Head of caudate nucleus (tissue), 42 donors: ENCODE measurements at regions of chr6 and their contacts with region 1.

Region 1: GRCh38 chr6:132830334-132830751 is 16.0 kb downstream of the RPS12 start:
- DNase-seq: peak in 17 of 42 donors; percentile 17 to 75 (median 48)

Region 2: DNA sequence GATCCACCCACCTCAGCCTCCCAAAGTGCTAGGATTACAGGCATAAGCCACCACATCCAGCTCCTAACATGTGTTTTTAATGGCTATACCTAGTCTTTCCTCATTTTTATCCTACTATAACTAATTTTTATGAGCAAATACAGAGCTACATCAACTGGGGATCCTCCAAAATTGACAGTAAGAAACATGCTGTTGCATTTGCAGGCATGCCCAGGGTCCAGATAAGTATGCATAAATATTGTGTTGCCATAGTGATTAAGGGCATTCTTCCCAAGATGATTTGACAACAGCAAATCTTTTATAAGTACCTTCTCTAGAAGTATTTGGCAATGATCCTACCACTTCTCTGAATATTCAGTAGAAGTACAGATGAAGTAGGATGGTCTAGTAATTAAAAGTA is 387.1 kb before region 1 on chr6:
- intact Hi-C with region 1: no loop called
- DNase-seq: no peak

Region 3: DNA sequence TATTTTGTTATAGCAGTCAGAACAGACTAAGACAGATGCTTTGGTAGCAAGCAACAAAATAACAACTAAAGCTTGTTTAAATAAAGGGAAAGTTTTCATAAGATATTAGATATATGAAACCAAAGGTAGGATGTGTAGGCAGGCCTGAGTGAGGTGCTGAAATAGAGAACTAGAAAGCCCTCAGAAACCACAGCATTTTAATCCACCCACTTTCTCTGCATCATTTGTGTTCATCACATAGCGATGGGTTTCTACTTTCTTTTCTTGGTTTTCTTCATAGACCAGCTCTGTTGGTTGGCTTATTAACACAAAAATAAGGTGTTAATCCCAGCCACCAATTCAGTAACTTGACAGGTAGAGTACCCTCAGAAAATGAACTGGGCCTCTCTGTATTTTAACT is 42.6 kb after region 1 on chr6:
- intact Hi-C with region 1: no loop called
- DNase-seq: no peak

Region 4: GRCh38 chr6:133512410-133513016 is 682.2 kb after region 1 on chr6:
- intact Hi-C with region 1: loop called (anchors 10 kb)
- DNase-seq: peak; percentile 11 to 83 (median 64)

Region 5: DNA sequence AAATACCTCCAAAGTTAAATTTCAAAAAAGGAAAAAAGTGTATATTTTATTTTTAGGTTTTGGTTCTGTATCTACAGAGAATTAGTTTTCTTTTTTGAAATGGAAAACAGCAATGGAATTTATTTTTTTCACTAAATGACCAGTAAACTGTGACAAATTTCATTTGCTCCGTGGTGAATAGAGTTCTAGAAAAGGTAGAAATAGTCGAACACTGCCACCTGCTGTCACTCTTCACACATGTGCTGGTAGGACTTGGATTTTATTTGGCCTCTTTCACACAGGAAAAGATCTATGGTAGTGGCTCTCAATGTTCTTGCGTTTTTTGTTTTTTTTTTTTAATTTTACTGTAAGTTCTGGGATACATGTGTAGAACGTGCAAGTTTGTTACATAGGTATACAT is 723.3 kb after region 1 on chr6:
- intact Hi-C with region 1: loop called (anchors 10 kb)
- DNase-seq: peak in 30 of 42 donors; percentile 19 to 77 (median 50)